Activated T-helper 2 cell treated with anti-CD3 and anti-CD28 coated beads, Interferon-gamma antibody, Interleukin-2, Interleukin-4, amounts not matched to agents 10 μg/mL and 5 μg/mL and 100 μg/mL, durations not matched to agents 14 hours and 24 hours and 36 hours (primary cell): ENCODE measurements at regions of chr19 and their contacts with region 1.

Region 1: DNA sequence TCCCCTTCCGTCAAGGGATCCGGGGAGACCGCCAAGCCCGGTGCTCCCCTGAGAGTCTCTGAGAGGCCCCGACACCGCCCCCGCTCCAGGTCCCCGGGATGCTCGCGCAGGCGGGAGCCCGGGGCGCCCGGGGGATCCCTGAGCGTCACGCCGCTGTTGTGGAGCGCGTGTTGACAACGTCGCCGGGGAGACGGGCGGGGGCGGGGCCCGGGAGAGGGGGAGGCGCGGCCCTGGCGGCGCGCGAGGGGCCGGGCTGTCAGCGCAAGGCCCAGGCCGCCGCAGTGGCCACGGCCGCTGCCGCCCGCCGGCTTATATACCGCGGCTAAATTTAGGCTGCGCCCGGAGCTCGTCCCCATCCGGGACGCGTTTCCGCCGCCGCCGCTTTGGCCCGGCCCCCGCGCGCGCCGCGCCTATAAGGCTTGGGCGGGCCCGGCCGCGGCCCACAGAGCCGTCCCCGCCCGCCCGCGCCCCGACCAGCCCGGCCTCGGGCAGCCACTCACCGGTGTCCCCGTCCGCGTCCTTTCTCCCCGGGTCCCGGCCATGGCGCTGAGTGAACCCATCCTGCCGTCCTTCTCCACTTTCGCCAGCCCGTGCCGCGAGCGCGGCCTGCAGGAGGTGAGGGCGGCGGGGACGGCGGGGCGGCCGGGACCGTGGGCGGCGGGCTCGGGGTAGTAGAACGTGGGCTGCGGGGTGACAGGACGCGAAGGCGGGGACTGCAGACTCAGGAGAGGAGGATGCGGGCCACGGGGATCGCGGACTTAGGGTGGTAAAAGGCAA is at the start of gene KLF2:
- DNase-seq: peak; percentile 91
- H3K4me3 Mint-ChIP-seq: peak within 1 kb of the TSS; percentile 39
- H3K27ac Mint-ChIP-seq: no peak within 1 kb of the TSS
- H3K4me1 Mint-ChIP-seq: peaks cover 38% of the 10 kb centered on the region
- H3K27me3 Mint-ChIP-seq: peaks cover 34% of the 10 kb centered on the region
- total RNA-seq, gene KLF2: 2.4 and 2.7 TPM in 2 replicates

Region 2: GRCh38 chr19:16247353-16248182 is 77.0 kb before region 1 on chr19:
- intact Hi-C with region 1: loop called (anchors 5 kb)
- DNase-seq: peak; percentile 71
- H3K4me3 Mint-ChIP-seq: no peak overlapping the region
- H3K27ac Mint-ChIP-seq: no peak overlapping the region
- H3K4me1 Mint-ChIP-seq: peaks cover 14% of the 10 kb centered on the region
- H3K27me3 Mint-ChIP-seq: peaks cover 12% of the 10 kb centered on the region

Region 3: DNA sequence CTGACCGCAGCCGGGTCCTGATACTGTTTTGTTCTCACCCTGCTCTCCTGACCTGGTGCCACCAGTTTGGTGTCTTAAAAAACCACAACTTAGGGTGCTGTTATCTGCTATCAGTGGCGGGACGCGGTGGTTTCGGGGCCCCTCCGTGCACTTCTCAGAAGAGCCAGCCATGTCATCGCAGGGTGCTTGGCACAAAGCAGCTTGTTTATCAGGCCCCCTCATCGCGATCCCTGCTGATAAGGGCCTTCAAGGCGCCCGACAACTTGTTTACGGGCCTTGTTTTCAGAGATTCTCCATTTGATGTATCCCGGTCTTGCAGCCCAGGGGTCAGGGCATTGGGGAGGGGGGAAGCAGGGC is 58.0 kb before region 1 on chr19:
- intact Hi-C with region 1: loop called (anchors 5 kb)
- DNase-seq: peak; percentile 80
- H3K4me3 Mint-ChIP-seq: peak overlapping the region; percentile 15
- H3K27ac Mint-ChIP-seq: peak overlapping the region; percentile 13
- H3K4me1 Mint-ChIP-seq: peaks cover 38% of the 10 kb centered on the region
- H3K27me3 Mint-ChIP-seq: peaks cover 25% of the 10 kb centered on the region

Region 4: GRCh38 chr19:16283210-16284061 is 41.1 kb before region 1 on chr19:
- intact Hi-C with region 1: loop called (anchors 5 kb)
- DNase-seq: peak; percentile 32
- H3K4me3 Mint-ChIP-seq: peak overlapping the region; percentile 14
- H3K27ac Mint-ChIP-seq: no peak overlapping the region
- H3K4me1 Mint-ChIP-seq: peaks cover 31% of the 10 kb centered on the region
- H3K27me3 Mint-ChIP-seq: peaks cover 45% of the 10 kb centered on the region

Region 5: DNA sequence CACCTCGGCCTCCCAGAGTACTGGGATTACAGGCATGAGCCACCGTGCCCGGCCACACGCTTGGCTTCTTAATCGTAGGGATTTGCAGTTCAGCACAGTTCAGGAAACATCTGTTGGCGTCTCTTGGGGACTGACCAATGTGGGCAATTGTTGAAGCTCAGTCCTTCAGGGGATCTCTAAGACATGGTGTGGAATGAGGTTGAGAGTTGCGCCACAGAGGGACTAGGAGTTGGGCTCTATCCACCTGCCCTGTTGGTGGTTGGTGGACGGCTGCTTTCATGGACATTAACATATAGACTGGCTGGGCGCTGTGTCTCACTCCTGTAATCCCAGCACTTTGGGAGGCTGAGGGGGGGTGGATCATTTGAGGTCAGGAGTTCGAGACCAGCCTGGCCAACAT is 467.4 kb after region 1 on chr19:
- intact Hi-C with region 1: no loop called
- DNase-seq: no peak
- H3K4me3 Mint-ChIP-seq: no peak overlapping the region
- H3K27ac Mint-ChIP-seq: no peak overlapping the region
- H3K4me1 Mint-ChIP-seq: no peaks in the 10 kb centered on the region
- H3K27me3 Mint-ChIP-seq: no peaks in the 10 kb centered on the region